ENCODE measurements at regions of chr17 and their contacts with region 1.

Region 1: GRCh38 chr17:42577532-42578281 is at the start of gene PSMC3IP:
- DNase-seq: peak; percentile 96
- H3K4me3 ChIP-seq: peak within 1 kb of the TSS; percentile 53 to 80 (median 76)
- H3K27ac ChIP-seq: peak within 1 kb of the TSS; percentile 50
- H3K4me1 ChIP-seq: peaks cover 18% of the 10 kb centered on the region
- H3K27me3 ChIP-seq: no peaks in the 10 kb centered on the region
- CTCF ChIP-seq: peak; percentile 55 to 64
- POLR2A ChIP-seq: peak; percentile 69
- total RNA-seq, gene PSMC3IP: 19.3 and 20.8 TPM in 2 replicates

Region 2: GRCh38 chr17:42598905-42599304 is 21.2 kb after region 1 on chr17:
- CTCF ChIA-PET with region 1: interaction called, 14 read pairs
- POLR2A ChIA-PET with region 1: interaction called, 6 read pairs
- dilution Hi-C with region 1: no loop called
- intact Hi-C with region 1: no loop called
- DNase-seq: no peak
- H3K4me3 ChIP-seq: no peak overlapping the region
- H3K27ac ChIP-seq: no peak overlapping the region
- H3K4me1 ChIP-seq: no peaks in the 10 kb centered on the region
- H3K27me3 ChIP-seq: no peaks in the 10 kb centered on the region
- CTCF ChIP-seq: no peak
- POLR2A ChIP-seq: no peak

Region 3: GRCh38 chr17:42677008-42677857 is 99.5 kb after region 1 on chr17:
- CTCF ChIA-PET with region 1: interaction called, 235 read pairs
- POLR2A ChIA-PET with region 1: interaction called, 4 read pairs
- dilution Hi-C with region 1: no loop called
- intact Hi-C with region 1: loop called (anchors 1 kb)
- DNase-seq: peak; percentile 100
- H3K4me3 ChIP-seq: peak overlapping the region in 2 of 3 experiments; percentile 70 to 87
- H3K27ac ChIP-seq: peak overlapping the region; percentile 47
- H3K4me1 ChIP-seq: peaks cover 42% of the 10 kb centered on the region
- H3K27me3 ChIP-seq: no peaks in the 10 kb centered on the region
- CTCF ChIP-seq: no peak
- POLR2A ChIP-seq: peak; percentile 24

Region 4: GRCh38 chr17:42720996-42721583 is 143.4 kb after region 1 on chr17:
- CTCF ChIA-PET with region 1: interaction called, 3 read pairs
- POLR2A ChIA-PET with region 1: no interaction called
- dilution Hi-C with region 1: no loop called
- intact Hi-C with region 1: loop called (anchors 2 kb)
- DNase-seq: peak; percentile 73
- H3K4me3 ChIP-seq: no peak overlapping the region
- H3K27ac ChIP-seq: no peak overlapping the region
- H3K4me1 ChIP-seq: no peaks in the 10 kb centered on the region
- H3K27me3 ChIP-seq: no peaks in the 10 kb centered on the region
- CTCF ChIP-seq: peak; percentile 47 to 52
- POLR2A ChIP-seq: no peak

Region 5: GRCh38 chr17:42819944-42820535 is 242.3 kb after region 1 on chr17:
- CTCF ChIA-PET with region 1: interaction called, 24 read pairs
- POLR2A ChIA-PET with region 1: no interaction called
- dilution Hi-C with region 1: no loop called
- intact Hi-C with region 1: loop called (anchors 1 kb)
- DNase-seq: peak; percentile 60
- H3K4me3 ChIP-seq: no peak overlapping the region
- H3K27ac ChIP-seq: no peak overlapping the region
- H3K4me1 ChIP-seq: peaks cover 14% of the 10 kb centered on the region
- H3K27me3 ChIP-seq: no peaks in the 10 kb centered on the region
- CTCF ChIP-seq: peak; percentile 81 to 90
- POLR2A ChIP-seq: no peak

Region 6: DNA sequence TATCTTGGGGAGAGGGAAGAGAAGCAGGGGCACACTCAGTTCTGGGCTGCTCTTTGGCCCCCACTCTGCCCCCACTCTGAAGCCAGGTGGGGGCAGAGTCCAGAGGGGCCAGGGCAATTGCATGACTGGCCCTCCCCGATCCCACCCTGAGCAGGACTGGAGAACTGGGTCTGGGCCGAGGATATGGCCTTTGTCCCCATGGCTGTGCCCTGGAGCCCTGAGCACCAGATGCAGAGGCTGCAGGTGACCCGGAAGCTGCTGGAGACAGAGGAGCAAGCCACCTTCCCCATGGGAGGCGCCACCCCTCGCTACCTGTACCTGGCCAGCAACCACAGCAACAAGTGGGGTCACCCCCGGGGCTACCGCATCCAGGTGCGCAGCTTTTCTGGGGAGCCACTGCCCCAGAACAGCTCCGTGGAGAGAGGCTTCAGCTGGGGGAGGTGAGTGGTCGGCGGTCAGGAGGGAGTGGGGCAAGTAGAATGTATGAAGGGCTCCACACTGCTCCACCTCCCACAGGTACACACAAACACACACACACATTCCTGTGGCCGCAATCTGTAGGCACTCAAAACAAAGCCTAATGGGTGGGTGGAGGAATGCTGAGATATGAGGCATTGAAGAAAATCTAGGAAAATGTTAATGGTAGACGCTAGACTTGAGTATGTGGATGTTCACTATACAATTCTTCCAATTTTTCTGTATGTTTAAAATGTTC is 294.7 kb after region 1 on chr17:
- CTCF ChIA-PET with region 1: no interaction called
- POLR2A ChIA-PET with region 1: no interaction called
- dilution Hi-C with region 1: no loop called
- intact Hi-C with region 1: no loop called
- DNase-seq: no peak
- H3K4me3 ChIP-seq: no peak overlapping the region
- H3K27ac ChIP-seq: no peak overlapping the region
- H3K4me1 ChIP-seq: no peaks in the 10 kb centered on the region
- H3K27me3 ChIP-seq: peaks cover 0 to 2% of the 10 kb centered on the region in 2 experiments
- CTCF ChIP-seq: no peak
- POLR2A ChIP-seq: no peak

Measured in endothelial cell of umbilical vein (primary cell).